ENCODE measurements at regions of chr2 and their contacts with region 1.

Region 1: GRCh38 chr2:201964631-201965206 is 68.9 kb upstream of the FZD7 start:
- DNase-seq: no peak
- H3K4me3 ChIP-seq: no peak overlapping the region
- H3K27ac ChIP-seq: no peak overlapping the region
- H3K4me1 ChIP-seq: peaks cover 0 to 23% (median 18%) of the 10 kb centered on the region in 4 experiments; a peak in 6 of 7 replicates
- H3K27me3 ChIP-seq: no peaks in the 10 kb centered on the region
- CTCF ChIP-seq: no peak
- EP300 ChIP-seq: no peak
- POLR2A ChIP-seq: no peak
- RAD21 ChIP-seq: no peak

Region 2: DNA sequence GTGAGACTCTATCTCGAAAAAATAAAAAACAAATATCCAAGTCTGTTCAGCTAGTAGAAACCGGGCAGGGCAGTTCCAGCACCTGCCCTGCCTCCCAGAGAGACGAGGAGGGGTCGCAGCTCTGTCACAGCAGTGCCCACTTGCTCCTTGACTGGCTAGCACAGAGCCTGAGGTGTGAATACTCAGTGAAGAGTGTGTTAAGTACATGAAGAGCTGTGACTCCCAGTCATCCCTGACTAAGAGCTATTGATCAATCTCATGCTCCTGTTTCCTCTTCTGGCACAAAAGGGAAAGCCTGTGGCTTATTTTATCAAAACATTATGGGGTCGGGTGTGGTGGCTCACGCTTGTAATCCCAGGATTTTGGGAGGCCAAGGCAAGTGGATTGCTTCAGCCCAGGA is 14.1 kb before region 1 on chr2:
- CTCF ChIA-PET with region 1: interaction called, 20 read pairs
- POLR2A ChIA-PET with region 1: interaction called, 186 read pairs
- DNase-seq: no peak
- H3K4me3 ChIP-seq: no peak overlapping the region
- H3K27ac ChIP-seq: no peak overlapping the region
- H3K4me1 ChIP-seq: peaks cover 8 to 43% (median 27%) of the 10 kb centered on the region in 4 experiments
- H3K27me3 ChIP-seq: no peaks in the 10 kb centered on the region
- CTCF ChIP-seq: no peak
- EP300 ChIP-seq: no peak
- POLR2A ChIP-seq: no peak
- RAD21 ChIP-seq: no peak

Region 3: GRCh38 chr2:201996006-201996405 is 31.3 kb after region 1 on chr2:
- CTCF ChIA-PET with region 1: interaction called, 5 read pairs
- POLR2A ChIA-PET with region 1: interaction called, 49 read pairs
- DNase-seq: peak; percentile 79 to 94
- H3K4me3 ChIP-seq: peak overlapping the region in 1 of 4 experiments; percentile 26; a peak in 1 of 8 replicates
- H3K27ac ChIP-seq: peak overlapping the region; percentile 58
- H3K4me1 ChIP-seq: peaks cover 9 to 24% (median 22%) of the 10 kb centered on the region in 4 experiments
- H3K27me3 ChIP-seq: no peaks in the 10 kb centered on the region; a peak in 1 of 7 replicates
- CTCF ChIP-seq: no peak
- EP300 ChIP-seq: peak; percentile 52 to 95; a peak in 2 of 3 replicates
- POLR2A ChIP-seq: no peak
- RAD21 ChIP-seq: peak in 1 of 2 experiments; percentile 9; a peak in 1 of 4 replicates

Region 4: GRCh38 chr2:202005272-202005887 is 40.7 kb after region 1 on chr2:
- CTCF ChIA-PET with region 1: interaction called, 15 read pairs
- POLR2A ChIA-PET with region 1: interaction called, 5 read pairs
- DNase-seq: no peak
- H3K4me3 ChIP-seq: no peak overlapping the region
- H3K27ac ChIP-seq: no peak overlapping the region
- H3K4me1 ChIP-seq: peaks cover 0 to 4% (median 0%) of the 10 kb centered on the region in 4 experiments; a peak in 3 of 7 replicates
- H3K27me3 ChIP-seq: no peaks in the 10 kb centered on the region
- CTCF ChIP-seq: no peak
- EP300 ChIP-seq: no peak
- POLR2A ChIP-seq: no peak
- RAD21 ChIP-seq: no peak

Region 5: DNA sequence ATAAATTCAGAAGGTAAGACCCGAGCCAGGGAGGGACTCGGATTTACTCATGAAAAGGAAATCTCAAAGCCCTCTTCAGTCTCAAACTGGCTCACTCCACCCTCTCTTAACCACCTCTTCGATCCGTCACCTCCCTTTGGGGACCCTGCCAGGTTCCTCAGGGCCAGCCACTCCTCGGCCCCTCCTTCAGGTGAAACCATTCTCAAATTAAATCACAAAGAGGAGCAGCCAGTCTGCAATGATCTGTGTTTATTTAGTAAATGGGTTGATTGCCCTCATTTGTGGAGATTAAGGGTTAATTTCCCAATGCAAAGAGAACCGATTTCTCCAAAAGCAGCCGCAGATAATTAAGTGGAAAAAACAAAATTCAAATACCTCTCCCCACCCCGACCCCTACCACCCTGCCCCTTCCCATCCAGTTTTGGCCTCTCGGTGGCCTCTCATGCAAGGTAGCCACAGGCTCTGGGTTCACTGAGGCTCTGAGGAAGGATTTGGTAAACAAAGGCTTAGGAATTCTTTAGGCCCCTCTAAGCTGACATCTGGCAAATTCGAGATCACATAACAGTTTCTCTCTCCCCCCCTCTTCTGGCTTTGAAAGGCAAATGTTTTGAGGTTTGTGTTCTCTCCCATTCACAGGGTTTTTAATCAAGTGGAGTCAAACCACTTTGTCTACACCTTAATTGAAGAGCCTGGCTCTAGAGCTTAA is 58.6 kb after region 1 on chr2:
- CTCF ChIA-PET with region 1: interaction called, 11 read pairs
- POLR2A ChIA-PET with region 1: interaction called, 4 read pairs
- DNase-seq: peak; percentile 71 to 84
- H3K4me3 ChIP-seq: peak overlapping the region in 1 of 4 experiments; percentile 44; a peak in 2 of 8 replicates
- H3K27ac ChIP-seq: peak overlapping the region; percentile 66; the same call in 1 of the 2 replicates
- H3K4me1 ChIP-seq: peaks cover 13 to 28% (median 25%) of the 10 kb centered on the region in 4 experiments
- H3K27me3 ChIP-seq: peaks cover 0 to 3% (median 0%) of the 10 kb centered on the region in 4 experiments; a peak in 3 of 7 replicates
- CTCF ChIP-seq: peak in 2 of 3 experiments; percentile 2 to 16; a peak in 1 of 4 replicates
- EP300 ChIP-seq: peak in 1 of 2 experiments; percentile 64; a peak in 1 of 3 replicates
- POLR2A ChIP-seq: no peak
- RAD21 ChIP-seq: peak; percentile 9 to 35; a peak in 2 of 4 replicates

Region 6: GRCh38 chr2:202084265-202084664 is 119.5 kb after region 1 on chr2:
- CTCF ChIA-PET with region 1: no interaction called
- POLR2A ChIA-PET with region 1: no interaction called
- DNase-seq: no peak
- H3K4me3 ChIP-seq: no peak overlapping the region; a peak in 1 of 8 replicates
- H3K27ac ChIP-seq: no peak overlapping the region
- H3K4me1 ChIP-seq: peaks cover 5 to 9% (median 7%) of the 10 kb centered on the region in 4 experiments; a peak in 6 of 7 replicates
- H3K27me3 ChIP-seq: no peaks in the 10 kb centered on the region
- CTCF ChIP-seq: no peak
- EP300 ChIP-seq: no peak
- POLR2A ChIP-seq: no peak
- RAD21 ChIP-seq: no peak

Region 7: DNA sequence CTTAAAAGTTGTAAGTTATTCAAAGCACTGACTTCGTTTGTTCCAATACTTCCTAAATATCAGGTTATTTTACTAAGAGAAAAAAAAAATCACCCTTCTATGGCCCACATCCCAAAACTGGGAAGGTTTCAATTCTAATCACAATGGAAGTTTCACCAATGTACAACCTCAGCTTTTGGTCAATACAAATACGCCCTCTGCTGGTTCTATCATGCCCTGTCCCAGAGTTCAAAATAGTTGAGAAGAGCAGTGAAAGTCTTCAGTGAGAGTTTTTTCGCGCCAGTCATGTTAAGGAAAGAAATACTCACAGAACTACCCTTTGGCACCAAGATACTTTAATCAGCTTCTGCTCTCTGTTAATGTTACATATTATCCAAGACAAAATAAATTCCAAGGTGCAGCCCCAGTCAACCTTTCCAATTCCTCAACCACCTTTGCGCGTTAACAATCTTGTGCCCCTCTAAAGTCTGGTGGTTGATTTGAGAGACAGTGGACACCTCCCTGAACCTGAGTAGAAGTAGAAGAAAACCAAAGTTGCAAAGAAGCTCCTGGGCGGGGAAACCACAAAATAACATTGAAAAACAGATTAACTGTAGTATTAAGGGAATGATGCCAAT is 213.7 kb after region 1 on chr2:
- CTCF ChIA-PET with region 1: no interaction called
- POLR2A ChIA-PET with region 1: no interaction called
- DNase-seq: peak in 1 of 2 experiments; percentile 74
- H3K4me3 ChIP-seq: no peak overlapping the region
- H3K27ac ChIP-seq: no peak overlapping the region
- H3K4me1 ChIP-seq: no peaks in the 10 kb centered on the region
- H3K27me3 ChIP-seq: no peaks in the 10 kb centered on the region
- CTCF ChIP-seq: peak in 2 of 3 experiments; percentile 76 to 86; a peak in 3 of 4 replicates
- EP300 ChIP-seq: no peak
- POLR2A ChIP-seq: no peak
- RAD21 ChIP-seq: peak; percentile 97 to 98